ENCODE measurements at regions of chr12 and their contacts with region 1.

Region 1: GRCh38 chr12:810671-811415 is 58.5 kb downstream of the WNK1 start:
- DNase-seq: no peak
- H3K4me3 Mint-ChIP-seq: no peak overlapping the region
- H3K27ac Mint-ChIP-seq: no peak overlapping the region
- H3K4me1 Mint-ChIP-seq: peaks cover 21% of the 10 kb centered on the region
- H3K27me3 Mint-ChIP-seq: no peaks in the 10 kb centered on the region
- CTCF ChIP-seq: no peak

Region 2: DNA sequence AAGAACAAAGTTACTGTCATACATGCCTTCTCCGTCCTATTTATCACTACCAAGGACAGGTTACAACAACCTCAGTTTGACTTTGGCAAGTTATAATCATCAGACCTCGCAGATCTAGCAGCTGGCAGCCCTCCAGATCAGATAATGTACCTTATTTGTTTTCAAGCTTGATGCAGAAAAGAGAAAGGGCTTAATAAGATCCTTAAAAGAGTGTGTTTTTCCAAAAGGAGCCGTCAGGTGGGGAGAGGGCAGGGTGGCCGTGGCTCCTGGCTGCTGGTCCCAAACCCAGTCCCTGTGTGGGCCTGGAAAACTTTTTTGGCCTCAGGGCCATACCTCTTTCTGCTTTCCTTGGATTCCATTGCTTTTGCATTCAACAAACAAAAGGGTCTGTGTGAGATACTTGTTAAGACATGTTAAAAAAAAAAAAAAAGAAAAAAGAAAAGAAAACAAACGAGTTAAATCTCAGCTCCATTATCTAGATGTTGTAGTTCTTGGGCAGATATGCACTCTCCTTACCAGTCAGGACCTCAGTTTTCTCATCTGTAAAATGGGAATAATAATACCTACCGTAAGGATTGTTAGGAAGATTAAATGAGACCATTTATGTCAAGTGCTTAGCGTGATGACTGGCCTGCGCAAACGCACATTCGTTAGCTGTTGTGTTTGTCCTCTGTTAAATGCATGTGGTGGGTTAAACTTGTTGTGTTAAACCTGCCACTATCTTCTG is 286.5 kb before region 1 on chr12:
- CTCF ChIA-PET with region 1: no interaction called
- intact Hi-C with region 1: no loop called
- DNase-seq: peak; percentile 39
- H3K4me3 Mint-ChIP-seq: no peak overlapping the region
- H3K27ac Mint-ChIP-seq: peak overlapping the region; percentile 9
- H3K4me1 Mint-ChIP-seq: peaks cover 10% of the 10 kb centered on the region
- H3K27me3 Mint-ChIP-seq: no peaks in the 10 kb centered on the region
- CTCF ChIP-seq: no peak

Region 3: DNA sequence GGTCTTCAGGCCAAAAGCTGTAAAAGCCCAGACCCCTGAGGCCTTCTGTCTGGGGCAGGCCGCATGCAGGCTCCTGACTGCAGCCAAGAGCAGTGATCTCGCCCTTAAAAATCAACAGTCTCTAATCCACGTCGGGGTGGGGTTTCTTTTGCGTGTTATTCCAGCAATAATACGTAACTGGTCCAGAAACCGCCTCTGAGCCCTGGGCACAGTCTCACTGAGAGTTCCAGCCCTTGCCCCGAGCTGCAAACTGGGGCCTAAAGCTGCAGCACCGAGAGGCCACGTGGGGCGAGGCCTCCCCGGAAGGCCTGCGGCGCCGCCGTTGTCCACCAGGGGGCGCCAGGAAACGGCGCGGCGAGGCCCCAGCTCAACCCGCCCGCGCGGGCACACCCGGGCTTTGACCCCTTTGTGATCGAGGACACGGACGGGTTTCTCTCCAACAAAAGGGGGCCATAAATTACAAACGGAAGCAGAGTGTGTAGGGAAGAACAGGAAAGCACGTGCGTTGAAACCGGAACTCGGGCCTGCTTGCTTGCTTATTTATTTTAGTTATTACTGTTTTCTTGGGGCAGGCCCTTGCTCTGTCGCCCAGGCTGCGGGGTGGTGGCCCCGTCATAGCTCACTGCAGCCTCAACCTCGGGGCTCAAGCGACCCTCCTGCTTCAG is 234.8 kb before region 1 on chr12:
- CTCF ChIA-PET with region 1: interaction called, 6 read pairs
- intact Hi-C with region 1: loop called (anchors 1 kb)
- DNase-seq: peak; percentile 90
- H3K4me3 Mint-ChIP-seq: peak overlapping the region; percentile 33
- H3K27ac Mint-ChIP-seq: no peak overlapping the region
- H3K4me1 Mint-ChIP-seq: peaks cover 26% of the 10 kb centered on the region
- H3K27me3 Mint-ChIP-seq: peaks cover 18% of the 10 kb centered on the region
- CTCF ChIP-seq: peak; percentile 98

Region 4: GRCh38 chr12:779745-780734 is 30.8 kb before region 1 on chr12:
- CTCF ChIA-PET with region 1: interaction called, 3 read pairs
- intact Hi-C with region 1: loop called (anchors 5 kb)
- DNase-seq: no peak
- H3K4me3 Mint-ChIP-seq: peak overlapping the region; percentile 52
- H3K27ac Mint-ChIP-seq: peak overlapping the region; percentile 58
- H3K4me1 Mint-ChIP-seq: peaks cover 42% of the 10 kb centered on the region
- H3K27me3 Mint-ChIP-seq: no peaks in the 10 kb centered on the region
- CTCF ChIP-seq: no peak

Measured in Calu3 (cell line).